Mammary epithelial cell (primary cell): ENCODE measurements at regions of chr2 and their contacts with region 1.

Region 1: GRCh38 chr2:163667064-163667887 is 68.5 kb downstream of the FIGN start:
- DNase-seq: peak; percentile 68
- H3K4me3 ChIP-seq: no peak overlapping the region
- H3K27ac ChIP-seq: peak overlapping the region; percentile 63
- H3K4me1 ChIP-seq: peaks cover 44% of the 10 kb centered on the region
- H3K27me3 ChIP-seq: no peaks in the 10 kb centered on the region
- CTCF ChIP-seq: no peak

Region 2: GRCh38 chr2:163266772-163267171 is 400.5 kb before region 1 on chr2:
- CTCF ChIA-PET with region 1: no interaction called
- dilution Hi-C with region 1: no loop called
- in situ Hi-C with region 1: no loop called
- intact Hi-C with region 1: loop called (anchors 5 kb)
- DNase-seq: peak; percentile 96
- H3K4me3 ChIP-seq: no peak overlapping the region
- H3K27ac ChIP-seq: no peak overlapping the region
- H3K4me1 ChIP-seq: peaks cover 17% of the 10 kb centered on the region
- H3K27me3 ChIP-seq: no peaks in the 10 kb centered on the region
- CTCF ChIP-seq: no peak

Region 3: DNA sequence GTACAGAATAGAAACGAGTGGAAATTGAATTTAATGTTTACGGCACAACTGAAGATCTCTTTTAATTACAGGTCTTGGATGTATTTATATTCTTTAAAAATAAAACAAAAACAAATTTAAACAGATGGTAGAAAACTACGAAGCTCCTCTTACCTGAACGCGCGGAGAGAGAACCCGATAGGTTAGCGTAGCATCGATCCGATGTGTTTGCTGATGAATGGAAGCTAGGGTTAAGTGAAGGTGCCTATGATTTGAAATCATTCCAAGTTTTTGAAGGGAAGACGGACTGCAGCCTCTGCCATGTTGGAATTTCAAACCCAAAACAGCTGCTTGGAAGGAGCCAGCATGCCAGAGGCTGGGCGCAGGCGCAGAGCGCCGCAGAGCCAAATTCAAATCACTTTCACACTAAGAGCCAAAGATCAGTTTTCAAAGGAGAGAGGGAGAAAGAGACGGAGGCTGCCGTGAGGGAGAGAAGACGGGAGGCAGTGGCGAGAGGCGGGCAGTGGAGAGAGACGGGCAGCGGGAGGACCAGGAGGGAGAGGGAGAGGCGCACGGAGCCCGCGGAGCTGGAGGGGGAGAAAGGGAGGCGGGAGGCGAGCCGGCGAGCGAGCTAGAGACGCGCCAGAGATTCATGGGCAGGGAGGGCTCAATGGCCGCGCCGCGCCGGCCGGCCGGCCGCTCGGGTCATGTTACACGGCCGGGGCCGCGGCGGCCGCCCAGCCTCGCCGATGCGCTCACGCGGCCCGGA is 68.6 kb after region 1 on chr2 and contains the start of gene FIGN:
- CTCF ChIA-PET with region 1: no interaction called
- dilution Hi-C with region 1: no loop called
- in situ Hi-C with region 1: no loop called
- intact Hi-C with region 1: loop called (anchors 2 kb)
- DNase-seq: peak; percentile 77
- H3K4me3 ChIP-seq: peak within 1 kb of the TSS; percentile 93 to 100 (median 98)
- H3K27ac ChIP-seq: peak within 1 kb of the TSS; percentile 80
- H3K4me1 ChIP-seq: peaks cover 17% of the 10 kb centered on the region
- H3K27me3 ChIP-seq: no peaks in the 10 kb centered on the region
- CTCF ChIP-seq: no peak
- total RNA-seq, gene FIGN: 2.5 to 10.7 TPM

Region 4: DNA sequence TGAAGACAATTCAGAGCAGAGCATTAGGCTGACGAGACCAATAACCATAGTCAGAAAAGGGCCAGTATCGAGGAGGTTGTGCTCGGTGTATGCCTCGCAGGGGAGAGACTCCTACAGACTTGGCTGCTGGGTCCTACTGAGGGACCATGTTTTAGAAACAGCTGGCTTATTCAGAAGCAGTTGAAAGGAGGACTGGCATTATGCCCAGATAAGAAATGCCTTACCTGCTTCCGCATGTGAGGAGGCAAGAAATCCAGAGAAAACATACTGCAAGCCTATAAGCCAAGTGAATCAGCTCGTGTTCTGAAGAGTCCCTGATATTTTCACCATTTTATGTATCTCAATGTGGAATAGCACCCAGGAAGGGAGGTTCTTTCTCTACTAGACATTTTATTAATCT is 519.3 kb after region 1 on chr2:
- CTCF ChIA-PET with region 1: no interaction called
- dilution Hi-C with region 1: no loop called
- in situ Hi-C with region 1: no loop called
- intact Hi-C with region 1: no loop called
- DNase-seq: peak; percentile 14
- H3K4me3 ChIP-seq: no peak overlapping the region
- H3K27ac ChIP-seq: no peak overlapping the region
- H3K4me1 ChIP-seq: no peaks in the 10 kb centered on the region
- H3K27me3 ChIP-seq: no peaks in the 10 kb centered on the region
- CTCF ChIP-seq: no peak